Dendritic cell treated with granulocyte-macrophage colony-stimulating factor and Interleukin-4, amounts not matched to agents 40 ng/mL and 50 ng/mL, for 4 days (primary cell): ENCODE measurements at regions of chr3 and their contacts with region 1.

Region 1: DNA sequence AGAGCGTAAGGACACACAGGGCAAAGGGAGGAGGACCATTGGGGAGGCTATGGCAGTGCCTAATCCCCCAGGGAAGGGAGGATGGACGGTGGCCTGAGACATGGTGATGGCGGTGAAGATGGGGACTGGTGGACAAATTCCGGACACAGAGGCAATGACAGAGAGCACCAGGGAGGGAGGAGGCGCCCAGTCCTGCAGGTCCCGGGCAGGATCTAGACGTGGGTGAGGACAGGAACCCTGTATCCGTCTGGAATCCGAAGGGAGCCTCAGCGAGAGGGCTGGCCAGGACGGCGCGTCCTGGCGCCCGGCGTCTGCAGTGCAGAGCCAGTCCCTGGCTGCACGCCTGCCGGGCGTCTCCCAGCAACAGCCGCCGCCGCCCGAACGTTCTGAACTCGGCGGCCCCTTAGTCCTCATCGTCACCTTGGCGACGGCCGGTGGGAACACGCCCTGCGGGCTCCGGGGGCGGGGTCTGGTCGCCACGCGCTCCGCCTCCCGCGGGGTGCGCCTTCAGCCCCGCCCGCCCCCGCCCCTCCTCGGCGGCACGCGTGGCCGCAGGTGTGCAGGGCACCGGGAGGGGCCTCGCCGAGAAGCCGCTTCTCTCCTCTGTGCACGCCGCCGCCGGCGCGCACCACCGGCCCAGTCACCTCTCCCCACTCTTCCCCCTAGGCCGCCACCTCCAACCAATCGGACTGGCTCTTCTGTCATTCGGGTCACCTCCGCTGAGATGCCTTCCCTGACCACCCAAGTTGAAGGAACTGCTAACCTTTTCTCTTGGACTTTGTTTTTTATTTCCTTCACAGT is 11.6 kb downstream of the XIRP1 start:
- H3K4me3 Mint-ChIP-seq: peak overlapping the region; percentile 72
- H3K27ac Mint-ChIP-seq: peak overlapping the region; percentile 72
- H3K4me1 Mint-ChIP-seq: peaks cover 53% of the 10 kb centered on the region
- H3K27me3 Mint-ChIP-seq: peaks cover 21% of the 10 kb centered on the region

Region 2: GRCh38 chr3:38227989-38228388 is 952.8 kb before region 1 on chr3:
- intact Hi-C with region 1: no loop called
- H3K4me3 Mint-ChIP-seq: no peak overlapping the region
- H3K27ac Mint-ChIP-seq: no peak overlapping the region
- H3K4me1 Mint-ChIP-seq: peaks cover 32% of the 10 kb centered on the region
- H3K27me3 Mint-ChIP-seq: no peaks in the 10 kb centered on the region

Region 3: GRCh38 chr3:39065197-39065596 is 115.5 kb before region 1 on chr3:
- intact Hi-C with region 1: no loop called
- H3K4me3 Mint-ChIP-seq: no peak overlapping the region
- H3K27ac Mint-ChIP-seq: no peak overlapping the region
- H3K4me1 Mint-ChIP-seq: peaks cover 10% of the 10 kb centered on the region
- H3K27me3 Mint-ChIP-seq: no peaks in the 10 kb centered on the region

Region 4: GRCh38 chr3:39150799-39151631 is 29.7 kb before region 1 on chr3:
- intact Hi-C with region 1: loop called (anchors 1 kb)
- H3K4me3 Mint-ChIP-seq: peak overlapping the region; percentile 88
- H3K27ac Mint-ChIP-seq: peak overlapping the region; percentile 89
- H3K4me1 Mint-ChIP-seq: peaks cover 76% of the 10 kb centered on the region
- H3K27me3 Mint-ChIP-seq: peaks cover 6% of the 10 kb centered on the region